ENCODE measurements at regions of chr15 and their contacts with region 1.

Region 1: GRCh38 chr15:33639978-33640377 is 328.3 kb upstream of the CHRM5 start:
- DNase-seq: no peak
- H3K4me3 ChIP-seq: no peak overlapping the region
- CTCF ChIP-seq: no peak
- POLR2A ChIP-seq: no peak

Region 2: GRCh38 chr15:32956006-32956405 is 684.0 kb before region 1 on chr15:
- intact Hi-C with region 1: loop called (anchors 5 kb)
- DNase-seq: no peak
- H3K4me3 ChIP-seq: no peak overlapping the region
- CTCF ChIP-seq: no peak
- POLR2A ChIP-seq: no peak

Region 3: DNA sequence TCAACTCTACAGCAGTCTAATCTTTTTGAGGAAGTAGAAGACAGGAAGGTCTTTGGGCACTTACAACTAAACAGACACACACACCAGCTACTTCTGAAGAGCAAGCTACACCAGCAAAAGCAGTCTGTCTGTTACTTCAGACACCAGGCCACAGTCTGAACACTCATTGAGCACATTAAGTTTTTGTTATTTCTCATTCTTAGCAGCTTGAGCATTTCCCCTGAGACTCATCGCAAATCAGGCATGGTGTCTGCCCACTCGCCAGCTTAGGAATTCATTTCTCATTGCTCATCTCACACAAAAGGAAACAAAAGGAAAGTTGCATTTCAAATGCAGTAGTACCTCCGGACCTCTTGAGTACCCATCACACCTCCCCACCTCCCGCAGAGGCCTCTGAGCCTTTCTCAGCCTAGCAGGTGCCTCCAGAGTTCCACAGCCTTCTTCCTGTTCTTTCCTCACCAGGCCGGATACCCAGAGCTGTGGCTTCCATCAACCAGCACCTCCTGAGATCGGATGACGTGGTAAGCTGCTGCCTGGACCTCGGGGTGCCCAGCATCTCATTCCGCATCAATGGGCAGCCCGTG is 27.2 kb before region 1 on chr15:
- intact Hi-C with region 1: no loop called
- DNase-seq: no peak
- H3K4me3 ChIP-seq: no peak overlapping the region
- CTCF ChIP-seq: no peak
- POLR2A ChIP-seq: no peak